ENCODE measurements at regions of chr10 and their contacts with region 1.

Region 1: DNA sequence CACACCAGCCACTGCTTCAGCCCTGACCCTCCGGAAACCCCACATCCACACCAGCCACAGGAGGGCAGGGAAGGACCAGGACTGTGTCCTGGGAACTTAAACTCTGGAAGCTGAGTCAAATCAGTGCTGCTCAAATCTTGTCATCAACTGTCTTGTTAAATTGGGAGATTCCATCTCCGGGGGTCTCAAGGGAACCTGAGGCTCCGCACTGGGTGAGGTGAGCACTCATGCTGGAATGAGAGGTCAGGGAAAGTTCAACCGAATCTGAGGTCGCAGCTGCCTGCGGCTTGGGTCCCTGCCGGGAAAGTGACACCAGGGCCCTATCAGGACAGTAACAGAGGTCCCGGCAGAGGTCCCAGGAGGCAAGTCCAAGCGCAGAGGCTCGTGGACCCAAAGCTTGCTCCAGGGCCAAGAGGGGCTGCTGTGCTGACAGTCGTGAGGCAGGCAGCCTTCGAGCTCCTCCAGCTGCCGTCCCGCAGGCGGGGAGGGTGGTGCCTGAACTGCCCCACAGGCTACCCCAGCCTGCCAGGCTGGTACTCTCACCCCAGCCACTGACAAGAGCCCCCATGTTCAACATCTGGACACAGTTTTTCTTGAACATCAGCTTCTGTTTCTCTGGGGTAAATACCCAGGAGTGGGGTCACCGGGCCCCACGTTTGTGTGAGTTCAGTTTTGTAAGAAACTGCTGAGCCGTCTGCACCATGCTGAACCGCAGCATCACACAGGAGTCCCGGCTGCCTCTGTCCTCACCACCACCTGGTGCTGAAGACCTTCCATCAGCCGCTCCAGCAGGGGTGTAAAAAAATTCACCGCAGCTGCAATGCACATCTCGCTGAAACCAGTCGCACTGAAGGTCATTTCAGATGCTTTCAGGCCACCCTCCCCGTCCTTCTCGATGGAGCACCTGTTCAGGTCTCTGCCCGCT is 101.0 kb downstream of the DIP2C start:
- DNase-seq: no peak
- H3K4me3 ChIP-seq: no peak overlapping the region
- H3K27ac ChIP-seq: no peak overlapping the region
- H3K4me1 ChIP-seq: no peaks in the 10 kb centered on the region
- H3K27me3 ChIP-seq: no peaks in the 10 kb centered on the region
- CTCF ChIP-seq: peak in 1 of 4 experiments; percentile 16
- POLR2A ChIP-seq: no peak

Region 2: GRCh38 chr10:680146-680545 is 91.6 kb after region 1 on chr10:
- intact Hi-C with region 1: no loop called
- DNase-seq: no peak
- H3K4me3 ChIP-seq: no peak overlapping the region
- H3K27ac ChIP-seq: no peak overlapping the region
- H3K4me1 ChIP-seq: no peaks in the 10 kb centered on the region
- H3K27me3 ChIP-seq: no peaks in the 10 kb centered on the region
- CTCF ChIP-seq: no peak
- POLR2A ChIP-seq: no peak

Region 3: GRCh38 chr10:784403-785088 is 196.0 kb after region 1 on chr10:
- intact Hi-C with region 1: loop called (anchors 10 kb)
- DNase-seq: peak; percentile 43
- H3K4me3 ChIP-seq: peak overlapping the region; percentile 27 to 45
- H3K27ac ChIP-seq: peak overlapping the region in 1 of 2 donors; percentile 9
- H3K4me1 ChIP-seq: no peaks in the 10 kb centered on the region
- H3K27me3 ChIP-seq: no peaks in the 10 kb centered on the region
- CTCF ChIP-seq: peak in 1 of 4 experiments; percentile 40
- POLR2A ChIP-seq: no peak

Region 4: GRCh38 chr10:895319-895718 is 306.8 kb after region 1 on chr10:
- intact Hi-C with region 1: no loop called
- DNase-seq: peak; percentile 18
- H3K4me3 ChIP-seq: no peak overlapping the region
- H3K27ac ChIP-seq: no peak overlapping the region
- H3K4me1 ChIP-seq: no peaks in the 10 kb centered on the region
- H3K27me3 ChIP-seq: no peaks in the 10 kb centered on the region
- CTCF ChIP-seq: no peak
- POLR2A ChIP-seq: no peak

Measured in prostate gland (tissue), 2 donors.